ENCODE measurements at regions of chr6 and their contacts with region 1.

Region 1: GRCh38 chr6:110815217-110816109 is at the start of gene CDK19:
- DNase-seq: peak; percentile 99
- H3K4me3 ChIP-seq: peak within 1 kb of the TSS; percentile 85 to 91
- H3K4me3 Mint-ChIP-seq: peak within 1 kb of the TSS; percentile 95 to 100 (median 98)
- H3K27ac ChIP-seq: peak within 1 kb of the TSS; percentile 75
- H3K27ac Mint-ChIP-seq: peak within 1 kb of the TSS; percentile 98 to 100 (median 99)
- H3K4me1 ChIP-seq: peaks cover 26% of the 10 kb centered on the region
- H3K4me1 Mint-ChIP-seq: peaks cover 14 to 38% (median 20%) of the 10 kb centered on the region in 4 donors
- H3K27me3 ChIP-seq: no peaks in the 10 kb centered on the region
- H3K27me3 Mint-ChIP-seq: no peaks in the 10 kb centered on the region
- total RNA-seq, gene CDK19: 23.8 to 24.3 TPM

Region 2: GRCh38 chr6:109455502-109456282 is 1359.8 kb before region 1 on chr6 and contains the start of gene MICAL1:
- CTCF ChIA-PET with region 1: no interaction called
- POLR2A ChIA-PET with region 1: no interaction called
- intact Hi-C with region 1: loop called (anchors 10 kb)
- DNase-seq: peak; percentile 78 to 90 (median 81)
- H3K4me3 ChIP-seq: peak within 1 kb of the TSS; percentile 76 to 91
- H3K4me3 Mint-ChIP-seq: peak within 1 kb of the TSS; percentile 87 to 99 (median 98)
- H3K27ac ChIP-seq: peak within 1 kb of the TSS; percentile 94
- H3K27ac Mint-ChIP-seq: peak within 1 kb of the TSS; percentile 95 to 100 (median 99)
- H3K4me1 ChIP-seq: peaks cover 75% of the 10 kb centered on the region
- H3K4me1 Mint-ChIP-seq: peaks cover 39 to 76% (median 59%) of the 10 kb centered on the region in 4 donors
- H3K27me3 ChIP-seq: no peaks in the 10 kb centered on the region
- H3K27me3 Mint-ChIP-seq: no peaks in the 10 kb centered on the region
- total RNA-seq, gene MICAL1: 76.5 to 79.3 TPM

Region 3: DNA sequence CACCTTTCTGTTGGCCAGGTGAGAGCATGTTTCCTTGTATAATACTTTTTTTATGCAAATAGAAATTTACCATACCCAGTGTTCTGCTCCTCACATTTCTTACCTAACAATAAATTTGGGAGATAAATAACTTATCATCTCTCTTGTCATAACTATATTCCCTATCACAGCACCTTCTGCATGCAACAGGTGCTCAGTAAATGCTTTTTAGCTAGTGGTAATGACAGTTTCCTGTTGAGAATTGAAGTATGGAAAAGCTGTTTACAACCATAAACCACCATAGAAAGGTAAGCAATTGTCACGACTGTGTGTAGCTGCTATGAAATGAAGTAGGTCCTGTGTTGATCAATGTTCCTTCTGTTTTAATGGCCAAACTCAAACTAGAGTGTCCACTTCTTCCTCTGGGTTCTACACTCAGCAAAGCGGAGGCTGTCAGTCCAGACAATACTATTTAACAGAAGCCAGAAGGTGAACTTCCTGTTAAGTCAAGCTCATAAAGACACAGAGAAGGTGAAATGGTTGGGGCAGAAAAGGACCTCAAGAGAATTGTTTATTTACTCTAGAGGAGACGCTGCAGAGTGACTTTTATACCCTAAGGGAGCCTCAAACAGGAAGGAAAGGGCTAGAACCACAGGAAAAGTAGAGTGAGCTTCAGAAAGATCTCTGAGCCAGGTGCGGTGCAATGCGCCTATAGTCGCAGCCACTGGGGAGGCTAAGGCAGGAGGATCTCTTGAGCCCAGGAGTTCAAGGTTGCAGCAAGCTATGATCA is 255.0 kb before region 1 on chr6:
- CTCF ChIA-PET with region 1: interaction called, 3 read pairs
- POLR2A ChIA-PET with region 1: interaction called, 10 read pairs
- intact Hi-C with region 1: no loop called
- DNase-seq: peak in 4 of 5 donors; percentile 28 to 49 (median 41)
- H3K4me3 ChIP-seq: peak overlapping the region in 1 of 2 donors; percentile 12
- H3K4me3 Mint-ChIP-seq: peak overlapping the region; percentile 29 to 81 (median 76)
- H3K27ac ChIP-seq: peak overlapping the region; percentile 23
- H3K27ac Mint-ChIP-seq: peak overlapping the region; percentile 79 to 93 (median 91)
- H3K4me1 ChIP-seq: peaks cover 44% of the 10 kb centered on the region
- H3K4me1 Mint-ChIP-seq: peaks cover 38 to 74% (median 52%) of the 10 kb centered on the region in 4 donors
- H3K27me3 ChIP-seq: no peaks in the 10 kb centered on the region
- H3K27me3 Mint-ChIP-seq: no peaks in the 10 kb centered on the region

Region 4: DNA sequence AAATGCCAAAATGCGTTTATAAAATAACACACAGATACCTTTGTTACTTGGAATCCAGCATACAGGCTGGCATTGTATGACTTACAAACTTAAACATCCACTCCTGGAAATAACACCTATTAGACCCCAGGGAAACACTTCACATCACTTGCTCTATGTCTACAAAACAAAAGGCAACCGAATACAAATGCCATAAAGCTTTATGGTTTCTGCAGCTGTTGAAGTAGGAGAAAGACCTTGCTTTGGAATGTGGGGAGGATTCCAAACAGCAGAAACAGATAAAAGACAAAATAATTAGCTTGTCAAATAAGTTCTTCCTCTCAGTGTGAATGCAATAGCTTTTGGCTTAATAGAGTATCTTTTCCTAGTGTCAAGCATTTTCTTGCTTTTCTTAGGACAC is 49.4 kb after region 1 on chr6:
- CTCF ChIA-PET with region 1: interaction called, 5 read pairs
- POLR2A ChIA-PET with region 1: interaction called, 23 read pairs
- intact Hi-C with region 1: no loop called
- DNase-seq: no peak
- H3K4me3 ChIP-seq: no peak overlapping the region
- H3K4me3 Mint-ChIP-seq: no peak overlapping the region
- H3K27ac ChIP-seq: no peak overlapping the region
- H3K27ac Mint-ChIP-seq: no peak overlapping the region
- H3K4me1 ChIP-seq: peaks cover 10% of the 10 kb centered on the region
- H3K4me1 Mint-ChIP-seq: peaks cover 3 to 8% (median 5%) of the 10 kb centered on the region in 4 donors
- H3K27me3 ChIP-seq: no peaks in the 10 kb centered on the region
- H3K27me3 Mint-ChIP-seq: no peaks in the 10 kb centered on the region

Region 5: GRCh38 chr6:110981202-110981600 is 165.7 kb after region 1 on chr6:
- CTCF ChIA-PET with region 1: interaction called, 7 read pairs
- POLR2A ChIA-PET with region 1: interaction called, 22 read pairs
- intact Hi-C with region 1: loop called (anchors 1 kb)
- DNase-seq: peak in 2 of 5 donors; percentile 1 to 29
- H3K4me3 ChIP-seq: peak overlapping the region; percentile 20 to 95
- H3K4me3 Mint-ChIP-seq: peak overlapping the region; percentile 93 to 99 (median 98)
- H3K27ac ChIP-seq: peak overlapping the region; percentile 86
- H3K27ac Mint-ChIP-seq: peak overlapping the region; percentile 99 to 100 (median 100)
- H3K4me1 ChIP-seq: peaks cover 17% of the 10 kb centered on the region
- H3K4me1 Mint-ChIP-seq: peaks cover 28 to 49% (median 30%) of the 10 kb centered on the region in 4 donors
- H3K27me3 ChIP-seq: no peaks in the 10 kb centered on the region
- H3K27me3 Mint-ChIP-seq: no peaks in the 10 kb centered on the region

Measured in CD4-positive, alpha-beta memory T cell (primary cell).